GM10248 (cell line): ENCODE measurements at regions of chr18 and their contacts with region 1.

Region 1: DNA sequence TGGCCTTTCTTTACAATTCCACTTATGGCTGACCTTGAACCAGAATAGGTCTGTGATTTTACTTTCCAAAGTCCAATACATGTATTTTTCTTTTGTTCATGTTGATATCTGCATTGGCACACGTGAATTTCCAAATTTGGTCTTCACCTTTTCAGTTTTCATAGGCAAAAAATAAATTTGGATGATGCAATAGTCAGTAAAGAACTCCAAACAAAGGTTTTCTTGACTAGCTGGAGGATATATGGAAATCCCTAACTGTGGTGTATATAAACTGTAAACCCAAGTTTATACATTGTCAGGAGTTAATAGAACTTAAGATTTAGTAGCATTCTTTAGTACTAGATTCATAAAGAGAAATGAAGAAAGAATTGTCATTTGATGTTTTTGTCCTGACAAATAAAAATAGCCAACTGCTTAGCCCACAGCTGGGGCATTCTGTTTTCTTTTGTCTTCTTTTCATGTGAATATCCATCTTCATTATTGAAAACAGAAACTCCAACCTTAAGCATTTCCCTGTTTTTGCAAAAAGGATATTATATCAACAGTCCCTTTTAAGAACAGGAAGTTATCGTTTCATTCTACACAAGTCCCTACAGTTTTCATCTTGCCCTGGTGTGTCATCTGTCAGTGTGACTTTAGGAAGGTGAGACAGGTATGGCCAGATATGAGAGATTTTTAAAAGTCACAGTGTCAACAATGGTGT is 132.9 kb downstream of the BCL2 start:
- DNase-seq: no peak
- CTCF ChIP-seq: no peak

Region 2: GRCh38 chr18:63175264-63175663 is 11.4 kb before region 1 on chr18:
- CTCF ChIA-PET with region 1: interaction called, 16 read pairs
- POLR2A ChIA-PET with region 1: no interaction called
- DNase-seq: no peak
- CTCF ChIP-seq: no peak